ENCODE measurements at regions of chr12 and their contacts with region 1.

Region 1: DNA sequence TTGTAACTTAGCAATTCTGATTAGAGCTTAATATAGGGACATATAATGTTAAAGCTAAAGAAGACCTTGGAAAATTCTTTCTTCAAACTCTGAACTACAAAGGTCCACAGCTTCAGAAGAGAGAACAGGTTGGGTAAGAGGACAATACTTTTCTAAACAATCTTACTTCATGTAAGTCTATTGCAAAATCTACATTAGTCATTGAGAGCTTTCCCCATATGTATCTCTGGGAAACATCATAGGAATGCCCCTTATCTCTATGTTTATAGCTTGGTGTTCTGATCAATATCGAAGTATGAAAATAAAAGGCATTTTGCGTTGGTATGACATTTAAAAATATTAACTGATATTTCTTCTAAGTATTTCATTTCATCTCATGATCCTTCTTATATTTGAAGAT is 962.6 kb downstream of the AACS start:
- DNase-seq: no peak
- H3K4me3 ChIP-seq: no peak overlapping the region
- H3K27ac ChIP-seq: no peak overlapping the region
- H3K4me1 ChIP-seq: no peaks in the 10 kb centered on the region
- H3K27me3 ChIP-seq: no peaks in the 10 kb centered on the region
- CTCF ChIP-seq: no peak
- EP300 ChIP-seq: no peak
- POLR2A ChIP-seq: no peak

Region 2: DNA sequence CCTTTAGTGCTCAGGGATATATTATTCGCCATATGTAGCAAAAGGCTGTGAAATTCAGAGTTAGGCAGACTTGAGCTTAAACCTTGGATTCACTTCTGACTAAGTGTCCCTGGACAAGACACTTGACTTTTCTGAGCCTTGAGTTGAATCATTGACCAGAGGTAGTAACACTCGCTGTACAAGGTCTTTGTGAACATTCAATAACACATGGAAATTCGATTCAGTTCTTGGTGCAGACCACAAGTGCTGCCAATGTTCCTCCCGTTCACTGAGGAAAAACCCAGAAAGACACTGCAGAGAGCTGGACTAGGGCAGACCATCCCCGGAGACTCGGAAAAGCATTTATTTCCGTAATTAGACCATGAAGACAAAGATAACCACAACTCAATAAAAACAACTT is 61.2 kb before region 1 on chr12:
- in situ Hi-C with region 1: no loop called
- intact Hi-C with region 1: loop called (anchors 10 kb)
- DNase-seq: no peak
- H3K4me3 ChIP-seq: no peak overlapping the region
- H3K27ac ChIP-seq: no peak overlapping the region
- H3K4me1 ChIP-seq: no peaks in the 10 kb centered on the region
- H3K27me3 ChIP-seq: no peaks in the 10 kb centered on the region
- CTCF ChIP-seq: no peak
- EP300 ChIP-seq: no peak
- POLR2A ChIP-seq: no peak